ENCODE measurements at regions of chr12 and their contacts with region 1.

Region 1: DNA sequence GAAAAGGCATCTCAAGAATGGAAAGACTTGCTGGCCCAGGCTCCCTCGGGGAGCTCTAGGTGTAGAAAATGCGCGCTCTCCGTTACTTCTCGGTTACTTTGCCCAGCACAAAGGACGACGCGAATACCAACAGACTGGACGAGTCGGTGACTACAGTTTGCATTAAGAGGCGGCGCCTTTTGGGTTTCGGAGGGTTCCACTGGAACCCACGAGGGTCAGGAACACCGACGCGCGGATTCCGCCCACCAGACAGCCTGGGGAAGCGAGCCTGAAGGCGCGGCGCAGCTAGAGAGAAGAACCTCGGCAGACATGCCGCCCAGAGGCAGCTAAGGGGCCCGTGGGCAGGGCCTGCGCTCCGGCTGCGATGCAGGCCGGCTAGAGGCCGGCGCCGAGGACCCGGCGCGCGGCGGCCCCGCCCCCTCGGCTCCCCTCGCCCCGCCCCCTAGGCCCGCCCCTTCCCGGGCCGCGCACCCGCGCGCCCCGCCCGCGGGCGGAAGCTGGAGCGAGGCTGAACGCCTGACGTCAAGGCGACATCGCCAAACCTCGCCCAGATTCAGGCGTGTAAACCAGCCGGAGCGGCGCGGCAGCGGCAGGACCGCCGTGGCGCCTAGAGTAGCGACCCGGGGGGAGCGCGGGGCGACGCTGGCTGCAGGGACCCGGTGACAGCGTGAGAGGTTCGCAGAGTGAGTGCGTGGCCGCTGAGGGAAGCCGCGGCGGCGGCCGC is at the start of gene RAP1B:
- DNase-seq: peak; percentile 92 to 95 (median 92)
- ATAC-seq: peak; percentile 92 to 98 (median 96)
- H3K4me3 ChIP-seq: peak within 1 kb of the TSS; percentile 54 to 91 (median 82)
- H3K27ac ChIP-seq: peak within 1 kb of the TSS; percentile 95 to 99 (median 96)
- H3K4me1 ChIP-seq: peaks cover 5 to 43% (median 34%) of the 10 kb centered on the region in 12 donors
- H3K27me3 ChIP-seq: no peaks in the 10 kb centered on the region
- CTCF ChIP-seq: peak in 1 of 12 donors; percentile 3
- POLR2A ChIP-seq: peak in 1 of 2 donors; percentile 96
- total RNA-seq, gene RAP1B: 39.2 to 113 (median 52.2) TPM

Region 2: DNA sequence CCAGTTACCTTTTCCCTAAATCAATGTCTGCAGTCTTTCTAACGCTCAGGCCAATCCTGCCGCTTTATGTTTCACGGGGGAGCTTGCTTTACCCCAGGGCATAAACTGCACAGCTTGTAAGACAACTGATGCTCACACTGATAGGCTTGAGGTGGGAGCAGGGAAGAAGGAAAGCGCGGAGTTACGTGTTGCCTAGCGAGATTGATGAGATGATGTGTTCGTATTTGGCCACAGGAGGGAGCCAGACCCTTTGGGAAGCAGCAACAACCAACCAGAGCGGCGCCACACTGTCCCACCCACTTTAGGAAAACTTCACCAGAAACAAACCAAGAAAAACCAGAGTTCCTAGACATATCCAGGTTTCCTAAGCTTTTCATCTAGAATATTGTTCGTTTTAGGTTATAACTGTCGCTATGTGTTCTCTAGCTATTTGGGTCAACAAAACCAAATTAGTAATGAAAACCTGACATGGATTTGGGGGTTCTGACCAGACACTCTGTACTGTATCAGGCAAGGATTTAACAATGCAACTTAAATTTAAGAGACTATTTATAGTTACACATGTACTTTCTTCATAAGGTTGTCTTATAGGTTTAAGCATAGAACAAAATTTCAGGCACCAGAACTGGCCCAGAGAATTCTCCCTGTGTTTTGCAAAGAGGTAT is 387.3 kb before region 1 on chr12:
- intact Hi-C with region 1: loop called in 1 of 10 experiments (anchors 5 kb)
- DNase-seq: peak; percentile 71 to 87 (median 78)
- ATAC-seq: peak; percentile 95 to 99 (median 98)
- H3K4me3 ChIP-seq: peak overlapping the region in 1 of 12 donors; percentile 18
- H3K27ac ChIP-seq: no peak overlapping the region
- H3K4me1 ChIP-seq: peaks cover 0 to 9% (median 0%) of the 10 kb centered on the region in 12 donors
- H3K27me3 ChIP-seq: peaks cover 0 to 10% (median 0%) of the 10 kb centered on the region in 9 donors
- CTCF ChIP-seq: peak; percentile 77 to 93 (median 84)
- POLR2A ChIP-seq: no peak

Region 3: GRCh38 chr12:68364893-68365725 is 245.4 kb before region 1 on chr12:
- intact Hi-C with region 1: loop called in 7 of 10 experiments (anchors 1 to 10 kb)
- DNase-seq: peak; percentile 90 to 96 (median 93)
- ATAC-seq: peak; percentile 94 to 99 (median 98)
- H3K4me3 ChIP-seq: peak overlapping the region in 11 of 12 donors; percentile 18 to 52 (median 44)
- H3K27ac ChIP-seq: peak overlapping the region; percentile 35 to 91 (median 86)
- H3K4me1 ChIP-seq: peaks cover 0 to 50% (median 20%) of the 10 kb centered on the region in 12 donors
- H3K27me3 ChIP-seq: no peaks in the 10 kb centered on the region
- CTCF ChIP-seq: peak in 3 of 12 donors; percentile 6 to 31 (median 25)
- POLR2A ChIP-seq: no peak

Region 4: GRCh38 chr12:68451261-68452077 is 159.1 kb before region 1 on chr12:
- intact Hi-C with region 1: loop called in 2 of 10 experiments (anchors 10 kb)
- DNase-seq: peak in 4 of 5 donors; percentile 16 to 47 (median 26)
- ATAC-seq: peak in 3 of 4 donors; percentile 35 to 69 (median 63)
- H3K4me3 ChIP-seq: peak overlapping the region in 6 of 12 donors; percentile 1 to 32 (median 18)
- H3K27ac ChIP-seq: peak overlapping the region in 7 of 12 donors; percentile 15 to 68 (median 52)
- H3K4me1 ChIP-seq: peaks cover 0 to 68% (median 43%) of the 10 kb centered on the region in 12 donors
- H3K27me3 ChIP-seq: no peaks in the 10 kb centered on the region
- CTCF ChIP-seq: no peak
- POLR2A ChIP-seq: no peak

Region 5: GRCh38 chr12:68559984-68560850 is 50.3 kb before region 1 on chr12:
- intact Hi-C with region 1: loop called in 1 of 10 experiments (anchors 10 kb)
- DNase-seq: peak in 4 of 5 donors; percentile 35 to 58 (median 41)
- ATAC-seq: peak; percentile 72 to 97 (median 85)
- H3K4me3 ChIP-seq: no peak overlapping the region
- H3K27ac ChIP-seq: peak overlapping the region; percentile 17 to 71 (median 52)
- H3K4me1 ChIP-seq: peaks cover 0 to 21% (median 11%) of the 10 kb centered on the region in 12 donors
- H3K27me3 ChIP-seq: no peaks in the 10 kb centered on the region
- CTCF ChIP-seq: no peak
- POLR2A ChIP-seq: no peak

Region 6: DNA sequence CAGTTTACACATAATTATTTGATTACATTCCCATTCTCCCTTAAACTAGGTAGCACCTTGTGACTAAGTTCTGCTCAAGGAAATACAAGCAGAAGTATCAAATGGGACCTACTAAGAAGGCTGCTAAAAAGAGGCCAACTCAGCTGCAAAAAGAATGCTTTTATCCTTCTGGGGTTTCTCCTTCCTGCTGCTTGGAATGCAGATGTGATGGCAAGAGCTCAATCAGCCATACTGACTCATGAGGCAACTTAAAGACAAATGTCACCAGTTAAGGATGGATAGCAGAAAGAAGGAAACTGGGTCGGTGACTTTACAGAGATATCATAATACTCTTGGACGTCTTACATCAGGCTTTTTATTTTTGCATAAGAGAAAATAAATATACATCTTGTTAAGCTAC is 37.9 kb before region 1 on chr12:
- intact Hi-C with region 1: no loop called
- DNase-seq: no peak
- ATAC-seq: no peak
- H3K4me3 ChIP-seq: no peak overlapping the region
- H3K27ac ChIP-seq: no peak overlapping the region
- H3K4me1 ChIP-seq: peaks cover 0 to 5% (median 0%) of the 10 kb centered on the region in 12 donors
- H3K27me3 ChIP-seq: no peaks in the 10 kb centered on the region
- CTCF ChIP-seq: no peak
- POLR2A ChIP-seq: no peak

Region 7: DNA sequence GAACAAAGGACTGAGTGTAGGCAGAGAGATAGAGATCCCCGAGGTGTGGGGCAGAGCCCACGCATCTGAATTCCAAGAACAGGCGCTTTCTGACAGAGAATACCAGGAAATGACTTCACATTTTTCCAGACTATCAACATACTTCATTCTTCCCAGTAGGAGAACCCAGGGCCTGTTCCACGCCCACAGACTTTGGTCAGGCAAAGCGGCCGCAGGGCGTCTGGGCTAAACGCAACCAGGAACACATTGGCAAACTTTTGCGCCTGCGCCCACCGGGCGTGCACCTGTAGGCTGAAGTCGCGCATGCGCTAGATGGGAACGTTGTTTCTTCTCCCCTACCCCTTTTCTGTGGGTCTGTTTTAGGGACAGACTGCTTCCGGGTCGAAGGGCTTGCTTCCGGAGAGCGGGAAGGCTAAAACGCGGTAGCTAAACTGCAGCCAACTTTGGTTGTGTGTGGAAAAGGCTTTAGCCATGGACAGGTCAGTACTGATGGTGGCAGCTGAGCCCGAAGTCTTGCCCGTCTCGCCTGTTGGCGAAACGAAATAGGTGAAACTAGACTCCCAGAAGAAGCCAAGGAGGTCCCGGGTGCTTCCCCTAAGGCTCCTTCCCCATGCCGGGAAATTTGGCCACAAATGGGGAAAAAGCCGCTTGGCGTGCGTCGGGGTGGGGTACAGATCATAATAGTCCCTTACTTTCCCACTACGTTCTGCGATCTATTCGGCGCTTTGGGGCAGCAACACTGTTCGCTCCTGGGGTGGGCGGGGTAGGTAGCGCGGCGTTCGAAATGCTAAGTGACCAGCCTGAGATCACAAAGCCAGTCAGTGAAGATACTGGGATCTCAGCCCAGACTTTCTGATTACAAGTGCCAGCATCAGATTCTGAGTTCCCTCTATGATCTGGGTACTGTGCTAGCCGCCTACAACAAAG is 76.3 kb after region 1 on chr12 and contains the start of gene NUP107:
- intact Hi-C with region 1: loop called in 7 of 10 experiments (anchors 1 to 5 kb)
- DNase-seq: peak; percentile 98 to 99 (median 99)
- ATAC-seq: peak; percentile 99
- H3K4me3 ChIP-seq: peak within 1 kb of the TSS; percentile 43 to 98 (median 85)
- H3K27ac ChIP-seq: peak within 1 kb of the TSS; percentile 43 to 81 (median 74)
- H3K4me1 ChIP-seq: peaks cover 0 to 23% (median 10%) of the 10 kb centered on the region in 12 donors
- H3K27me3 ChIP-seq: no peaks in the 10 kb centered on the region
- CTCF ChIP-seq: peak in 1 of 12 donors; percentile 21
- POLR2A ChIP-seq: peak in 1 of 2 donors; percentile 51
- total RNA-seq, gene NUP107: 12.8 to 27.0 (median 21.2) TPM

Measured in heart left ventricle (tissue), 16 donors.